Activated T-helper 1 cell treated with anti-CD3 and anti-CD28 coated beads, Interleukin-12 subunit alpha, Interleukin-12 subunit beta, Interleukin-2, Interleukin-4 antibody, amounts not matched to agents 30 ng/mL and 10 ng/mL and 1 ng/mL, durations not matched to agents 14 hours and 24 hours and 36 hours (primary cell): ENCODE measurements at regions of chr1 and their contacts with region 1.

Region 1: DNA sequence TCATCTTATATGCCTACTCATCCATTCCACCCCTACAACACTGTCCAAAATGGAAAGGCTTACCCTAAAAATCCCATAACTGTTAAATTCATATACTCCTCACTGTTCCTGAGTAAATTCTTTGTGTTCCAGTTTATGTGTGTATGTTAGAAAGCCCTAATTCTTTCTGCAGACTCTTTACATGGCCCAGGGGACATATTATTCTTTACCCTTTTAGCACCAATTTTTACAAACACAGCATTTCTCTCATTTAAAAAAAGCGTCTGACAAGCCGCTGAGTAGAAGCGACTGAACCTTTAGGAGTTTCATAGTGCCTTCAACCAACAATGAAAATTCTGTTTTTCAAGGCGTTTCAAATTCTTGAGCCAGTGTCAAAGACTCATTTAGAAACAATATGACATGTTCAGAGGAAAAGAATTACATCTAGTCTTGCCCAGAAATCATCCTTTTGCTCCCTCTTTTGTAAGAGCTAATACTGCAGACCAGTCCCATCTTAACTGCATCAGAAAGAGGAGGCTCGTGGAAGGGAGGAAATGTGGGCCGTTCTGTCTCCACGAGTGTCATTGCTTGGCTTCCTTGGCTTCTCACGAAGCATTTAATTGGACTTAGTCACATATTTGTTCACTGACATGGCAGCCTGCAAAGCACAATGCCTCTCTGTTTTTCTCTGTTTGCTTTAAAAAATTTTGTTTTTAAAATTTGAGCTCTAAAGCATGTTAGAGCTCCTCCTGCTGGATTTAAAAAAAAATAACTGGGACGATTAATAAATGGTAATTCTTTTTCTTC is 21.3 kb upstream of the C1orf105 start:
- DNase-seq: no peak
- H3K4me3 Mint-ChIP-seq: no peak overlapping the region
- H3K27ac Mint-ChIP-seq: peak overlapping the region; percentile 4
- H3K4me1 Mint-ChIP-seq: peaks cover 52% of the 10 kb centered on the region
- H3K27me3 Mint-ChIP-seq: no peaks in the 10 kb centered on the region

Region 2: GRCh38 chr1:172002725-172003345 is 396.3 kb before region 1 on chr1:
- intact Hi-C with region 1: loop called (anchors 1 kb)
- DNase-seq: no peak
- H3K4me3 Mint-ChIP-seq: no peak overlapping the region
- H3K27ac Mint-ChIP-seq: no peak overlapping the region
- H3K4me1 Mint-ChIP-seq: no peaks in the 10 kb centered on the region
- H3K27me3 Mint-ChIP-seq: no peaks in the 10 kb centered on the region

Region 3: GRCh38 chr1:172089768-172090510 is 309.2 kb before region 1 on chr1:
- intact Hi-C with region 1: loop called (anchors 1 kb)
- DNase-seq: peak; percentile 20
- H3K4me3 Mint-ChIP-seq: no peak overlapping the region
- H3K27ac Mint-ChIP-seq: peak overlapping the region; percentile 36
- H3K4me1 Mint-ChIP-seq: peaks cover 7% of the 10 kb centered on the region
- H3K27me3 Mint-ChIP-seq: no peaks in the 10 kb centered on the region

Region 4: GRCh38 chr1:172135076-172135672 is 264.0 kb before region 1 on chr1:
- intact Hi-C with region 1: loop called (anchors 1 kb)
- DNase-seq: no peak
- H3K4me3 Mint-ChIP-seq: no peak overlapping the region
- H3K27ac Mint-ChIP-seq: no peak overlapping the region
- H3K4me1 Mint-ChIP-seq: peaks cover 19% of the 10 kb centered on the region
- H3K27me3 Mint-ChIP-seq: no peaks in the 10 kb centered on the region

Region 5: DNA sequence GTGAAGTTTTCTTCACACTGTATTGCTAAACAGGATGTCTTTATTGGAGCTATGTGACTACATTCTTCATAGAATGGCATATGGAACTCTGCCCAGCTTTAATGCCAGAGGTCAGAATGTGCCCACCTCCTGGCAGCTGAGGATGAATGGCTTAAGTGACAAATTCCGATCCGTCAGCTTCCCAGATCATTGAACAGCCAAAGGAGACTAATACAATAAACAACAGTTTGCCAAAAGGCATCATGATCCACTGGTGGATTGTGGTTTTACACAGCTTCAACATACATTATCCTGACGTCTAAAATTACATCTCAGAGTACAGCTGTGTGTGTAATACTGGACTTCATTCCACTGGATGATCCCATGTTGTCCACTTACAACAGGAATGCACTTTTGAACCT is 47.4 kb before region 1 on chr1:
- intact Hi-C with region 1: no loop called
- DNase-seq: no peak
- H3K4me3 Mint-ChIP-seq: no peak overlapping the region
- H3K27ac Mint-ChIP-seq: no peak overlapping the region
- H3K4me1 Mint-ChIP-seq: peaks cover 40% of the 10 kb centered on the region
- H3K27me3 Mint-ChIP-seq: no peaks in the 10 kb centered on the region

Region 6: DNA sequence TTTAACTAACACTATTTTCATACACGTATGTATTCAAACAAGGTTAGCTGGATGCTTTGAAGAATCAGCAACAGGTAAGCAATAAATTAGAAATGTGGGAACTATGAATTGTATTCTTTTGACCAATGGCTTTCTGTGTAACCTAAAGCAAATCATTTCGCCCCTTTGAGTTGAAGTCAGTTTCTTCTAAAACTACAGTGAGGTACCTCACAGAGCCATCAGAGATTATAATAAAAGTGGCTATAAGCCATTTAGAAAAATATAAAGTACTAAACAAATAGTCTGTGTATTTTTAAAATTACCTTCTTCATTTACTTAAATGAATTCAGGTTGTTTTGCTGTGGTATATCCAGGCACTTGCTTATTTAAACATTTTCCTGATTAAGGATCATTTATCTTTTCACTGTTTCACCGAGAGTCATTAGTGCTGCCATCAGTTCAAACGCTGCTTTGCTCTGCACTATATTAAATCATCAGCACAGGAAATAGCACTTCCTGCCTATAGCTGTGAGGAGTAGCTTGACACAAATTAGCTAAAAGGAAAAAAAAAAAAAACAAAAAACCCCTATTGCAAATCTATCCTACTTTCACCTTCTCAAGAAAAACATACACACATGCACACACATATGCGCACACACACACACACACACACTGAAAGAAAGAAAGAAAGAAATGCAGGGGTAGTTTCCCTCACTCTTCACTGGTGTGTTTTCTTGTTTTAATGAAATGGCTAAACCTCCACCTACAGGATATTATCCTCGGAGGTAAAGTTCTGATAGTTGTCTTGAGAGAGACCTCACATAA is 18.5 kb before region 1 on chr1:
- intact Hi-C with region 1: loop called (anchors 1 kb)
- DNase-seq: no peak
- H3K4me3 Mint-ChIP-seq: peak overlapping the region; percentile 69
- H3K27ac Mint-ChIP-seq: peak overlapping the region; percentile 59
- H3K4me1 Mint-ChIP-seq: peaks cover 39% of the 10 kb centered on the region
- H3K27me3 Mint-ChIP-seq: peaks cover 4% of the 10 kb centered on the region

Region 7: GRCh38 chr1:173818459-173818858 is 1419.3 kb after region 1 on chr1:
- intact Hi-C with region 1: no loop called
- DNase-seq: no peak
- H3K4me3 Mint-ChIP-seq: no peak overlapping the region
- H3K27ac Mint-ChIP-seq: no peak overlapping the region
- H3K4me1 Mint-ChIP-seq: peaks cover 64% of the 10 kb centered on the region
- H3K27me3 Mint-ChIP-seq: no peaks in the 10 kb centered on the region